ENCODE measurements at regions of chrX and their contacts with region 1.

Region 1: DNA sequence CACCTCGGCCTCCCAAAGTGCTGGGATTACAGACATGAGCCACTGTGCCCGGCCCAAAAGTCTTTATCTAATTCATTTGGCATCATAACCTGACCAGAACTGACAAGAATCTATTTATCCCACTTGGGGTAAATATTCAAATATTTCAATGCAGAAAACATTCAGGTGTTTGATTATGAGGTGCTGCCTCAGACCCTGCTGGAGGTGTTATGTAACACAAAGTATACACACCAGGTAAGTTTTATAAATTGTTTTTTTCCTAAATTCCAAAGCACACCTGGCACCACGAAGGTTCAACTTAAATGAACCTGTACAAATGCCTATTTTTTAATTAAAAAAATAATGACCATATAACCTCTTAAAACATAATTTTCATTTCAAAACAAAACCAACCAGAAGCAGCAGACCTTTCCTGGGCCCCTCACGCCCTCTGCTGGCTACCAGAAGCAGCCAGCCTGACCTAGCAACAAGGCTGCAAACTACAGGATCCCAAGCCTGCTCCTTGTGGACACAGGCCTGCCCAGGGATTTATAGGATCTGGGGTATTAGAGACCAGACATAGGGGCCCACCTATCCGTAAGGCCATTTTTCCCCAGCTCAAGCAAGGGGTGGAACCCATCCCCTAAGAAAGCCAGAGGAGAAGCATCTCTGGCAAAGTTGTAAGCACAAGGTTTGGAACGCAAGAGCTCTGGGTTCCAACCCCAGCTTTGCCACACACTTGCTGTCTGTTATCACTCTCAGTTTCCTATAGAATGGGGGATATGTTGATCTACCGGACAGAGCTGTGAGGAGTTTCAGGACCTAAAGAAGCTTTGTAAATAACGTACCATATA is 11.7 kb downstream of the OTUD5 start:
- H3K4me3 Mint-ChIP-seq: no peak overlapping the region
- H3K27ac Mint-ChIP-seq: no peak overlapping the region
- H3K4me1 Mint-ChIP-seq: peaks cover 39% of the 10 kb centered on the region
- H3K27me3 Mint-ChIP-seq: no peaks in the 10 kb centered on the region

Region 2: GRCh38 chrX:48891402-48892288 is 54.1 kb before region 1 on chrX:
- intact Hi-C with region 1: no loop called
- H3K4me3 Mint-ChIP-seq: peak overlapping the region; percentile 79
- H3K27ac Mint-ChIP-seq: peak overlapping the region; percentile 12
- H3K4me1 Mint-ChIP-seq: peaks cover 38% of the 10 kb centered on the region
- H3K27me3 Mint-ChIP-seq: peaks cover 8% of the 10 kb centered on the region

Region 3: DNA sequence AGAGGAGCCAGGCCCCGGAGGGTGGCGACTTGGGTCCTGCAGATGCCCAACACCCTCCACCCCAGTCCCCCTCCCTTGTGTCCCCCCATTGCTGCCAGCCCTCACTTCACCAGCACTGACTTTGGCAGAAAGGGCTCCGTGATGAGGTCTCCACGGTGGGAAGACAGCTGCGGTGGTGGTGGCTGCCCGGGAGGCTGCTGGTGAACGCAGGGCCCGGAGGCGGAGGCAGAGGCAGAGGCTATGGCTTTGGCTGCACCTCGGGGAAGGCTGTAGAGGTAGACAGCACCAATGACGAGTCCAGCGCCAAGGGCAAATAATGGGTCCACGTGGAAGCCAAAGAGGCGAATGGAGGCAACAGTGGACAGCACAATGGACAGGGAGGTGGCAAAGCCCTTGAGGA is 41.1 kb before region 1 on chrX:
- intact Hi-C with region 1: loop called (anchors 5 kb)
- H3K4me3 Mint-ChIP-seq: no peak overlapping the region
- H3K27ac Mint-ChIP-seq: no peak overlapping the region
- H3K4me1 Mint-ChIP-seq: no peaks in the 10 kb centered on the region
- H3K27me3 Mint-ChIP-seq: no peaks in the 10 kb centered on the region